OCI-LY7 (cell line): ENCODE measurements at regions of chr4 and their contacts with region 1.

Region 1: DNA sequence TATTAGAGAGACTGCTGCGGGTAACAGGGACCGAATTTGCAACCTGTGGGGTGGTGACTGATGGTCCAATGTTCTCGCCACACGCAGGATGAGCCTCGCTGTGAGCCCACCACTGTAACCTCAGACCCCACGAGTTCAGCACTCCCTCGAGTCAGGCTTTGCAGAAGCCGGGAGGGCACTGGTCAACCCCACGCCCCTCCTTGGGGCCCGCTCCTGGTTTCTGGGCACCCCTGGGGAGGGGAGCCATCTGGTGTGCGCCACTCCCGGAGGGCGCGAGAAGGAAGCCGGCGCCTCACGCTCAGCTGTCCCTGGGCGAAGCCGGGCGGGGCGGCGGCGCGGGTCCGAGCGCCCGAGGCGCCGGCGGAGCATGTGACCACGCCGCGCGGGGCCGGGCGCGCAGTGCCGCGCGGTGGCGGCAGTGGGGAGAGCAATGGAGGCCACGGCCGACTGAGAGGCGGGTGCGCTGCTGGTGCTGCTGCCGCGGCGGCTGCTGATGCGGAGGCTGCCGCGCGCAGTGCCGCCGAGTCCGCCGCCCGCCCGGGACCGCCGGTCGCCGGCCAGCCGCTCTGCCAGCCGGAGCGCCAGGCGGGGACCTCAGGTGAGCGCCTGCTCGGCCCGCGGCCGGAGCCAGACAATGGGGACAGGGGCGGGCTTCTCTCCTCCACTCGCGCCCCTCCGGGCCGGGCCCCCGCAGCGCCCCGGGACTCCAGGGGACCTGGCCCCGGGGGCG is 100.1 kb downstream of the CEP135 start:
- DNase-seq: peak; percentile 89
- H3K4me3 ChIP-seq: peak overlapping the region; percentile 81
- H3K27ac ChIP-seq: peak overlapping the region; percentile 72
- H3K4me1 ChIP-seq: peaks cover 31% of the 10 kb centered on the region
- CTCF ChIP-seq: no peak; the same call in 1 of the 2 replicates

Region 2: GRCh38 chr4:56062603-56063031 is 13.8 kb after region 1 on chr4:
- CTCF ChIA-PET with region 1: no interaction called
- POLR2A ChIA-PET with region 1: interaction called, 13 read pairs
- intact Hi-C with region 1: no loop called
- DNase-seq: no peak
- H3K4me3 ChIP-seq: no peak overlapping the region
- H3K27ac ChIP-seq: no peak overlapping the region
- H3K4me1 ChIP-seq: no peaks in the 10 kb centered on the region
- CTCF ChIP-seq: no peak

Region 3: GRCh38 chr4:56301181-56302076 is 252.6 kb after region 1 on chr4:
- CTCF ChIA-PET with region 1: no interaction called
- POLR2A ChIA-PET with region 1: no interaction called
- intact Hi-C with region 1: loop called (anchors 1 kb)
- DNase-seq: peak; percentile 77
- H3K4me3 ChIP-seq: no peak overlapping the region
- H3K27ac ChIP-seq: no peak overlapping the region
- H3K4me1 ChIP-seq: no peaks in the 10 kb centered on the region
- CTCF ChIP-seq: peak; percentile 98